ENCODE measurements at regions of chr3 and their contacts with region 1.

Region 1: DNA sequence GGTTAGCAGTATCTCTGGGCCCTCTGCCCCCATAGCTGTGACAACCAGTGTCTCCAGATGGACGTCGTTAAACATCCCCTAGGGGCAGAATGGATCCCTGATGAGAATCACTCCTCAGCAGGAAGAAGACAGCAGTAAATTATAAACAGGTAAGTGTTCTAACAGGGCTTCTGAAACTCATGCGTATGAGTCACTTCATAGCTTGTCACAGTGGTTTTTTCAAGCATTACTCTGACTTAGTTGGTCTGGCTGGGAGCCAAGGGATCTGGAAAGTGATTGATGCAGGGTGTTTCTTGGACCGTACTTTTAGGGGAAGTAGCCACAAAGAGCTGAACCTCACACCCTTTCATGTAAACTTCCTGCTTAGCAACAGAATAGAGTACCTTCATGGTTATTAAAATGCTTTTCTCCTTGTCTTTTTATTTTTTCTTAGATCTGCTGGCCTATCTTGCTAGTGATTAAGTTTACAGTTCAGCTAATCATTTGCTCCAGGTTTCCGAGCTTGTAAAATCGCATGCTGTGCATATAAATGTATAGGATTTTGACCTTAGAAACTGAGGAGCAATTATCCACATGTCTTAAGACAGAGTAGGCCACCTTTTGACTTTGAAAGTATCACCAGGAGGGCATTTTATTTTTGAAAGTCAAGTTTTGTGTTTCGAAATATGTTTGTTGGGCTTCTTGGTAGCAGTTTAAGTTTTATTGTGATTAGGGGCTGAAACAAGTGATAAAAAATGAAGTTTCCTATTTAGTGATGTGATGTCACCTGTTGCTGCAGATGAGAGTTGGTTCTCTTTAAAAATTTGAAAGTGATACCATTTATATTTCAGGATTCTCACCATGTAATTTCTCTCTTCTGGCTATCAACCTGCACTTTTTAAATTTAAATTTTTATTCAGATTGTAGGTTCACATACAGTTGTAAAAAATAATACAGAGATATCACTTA is 333.9 kb downstream of the PTPRG start:
- DNase-seq: peak; percentile 74 to 91
- H3K4me3 ChIP-seq: no peak overlapping the region
- H3K27ac ChIP-seq: peak overlapping the region; percentile 38
- H3K4me1 ChIP-seq: peaks cover 17% of the 10 kb centered on the region
- H3K27me3 ChIP-seq: no peaks in the 10 kb centered on the region
- CTCF ChIP-seq: no peak

Region 2: DNA sequence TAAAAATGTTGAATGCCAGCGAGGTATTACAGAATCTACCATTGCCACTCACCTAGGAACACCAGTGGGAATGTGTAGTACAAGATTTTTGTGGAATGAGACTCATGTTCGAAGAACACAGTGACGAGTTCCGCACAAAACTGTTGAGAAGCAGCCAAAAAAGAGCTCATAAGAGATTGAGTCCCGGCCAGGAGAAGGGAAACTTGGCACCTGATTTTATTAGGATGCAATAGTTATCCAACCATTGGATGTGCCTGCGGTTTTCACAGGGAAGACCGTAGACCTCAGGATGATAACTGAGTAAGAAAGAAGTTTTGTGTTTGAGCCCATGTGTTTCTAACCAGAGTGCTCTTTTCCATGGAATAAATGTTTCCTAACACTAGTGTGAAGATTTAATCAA is 245.0 kb before region 1 on chr3:
- CTCF ChIA-PET with region 1: no interaction called
- POLR2A ChIA-PET with region 1: no interaction called
- intact Hi-C with region 1: no loop called
- DNase-seq: no peak
- H3K4me3 ChIP-seq: no peak overlapping the region
- H3K27ac ChIP-seq: no peak overlapping the region
- H3K4me1 ChIP-seq: no peaks in the 10 kb centered on the region
- H3K27me3 ChIP-seq: no peaks in the 10 kb centered on the region
- CTCF ChIP-seq: no peak

Region 3: GRCh38 chr3:61966200-61966599 is 70.9 kb after region 1 on chr3:
- CTCF ChIA-PET with region 1: no interaction called
- POLR2A ChIA-PET with region 1: no interaction called
- intact Hi-C with region 1: loop called (anchors 5 kb)
- DNase-seq: peak; percentile 53 to 76
- H3K4me3 ChIP-seq: no peak overlapping the region
- H3K27ac ChIP-seq: no peak overlapping the region
- H3K4me1 ChIP-seq: no peaks in the 10 kb centered on the region
- H3K27me3 ChIP-seq: no peaks in the 10 kb centered on the region
- CTCF ChIP-seq: no peak

Region 4: GRCh38 chr3:62131592-62131991 is 236.3 kb after region 1 on chr3:
- CTCF ChIA-PET with region 1: no interaction called
- POLR2A ChIA-PET with region 1: interaction called, 13 read pairs
- intact Hi-C with region 1: no loop called
- DNase-seq: no peak
- H3K4me3 ChIP-seq: no peak overlapping the region
- H3K27ac ChIP-seq: no peak overlapping the region
- H3K4me1 ChIP-seq: peaks cover 10% of the 10 kb centered on the region; the same call in 1 of the 2 replicates
- H3K27me3 ChIP-seq: no peaks in the 10 kb centered on the region
- CTCF ChIP-seq: peak; percentile 37; the same call in 1 of the 2 replicates

Measured in PC-9 (cell line).